ENCODE measurements at regions of chr11 and their contacts with region 1.

Region 1: DNA sequence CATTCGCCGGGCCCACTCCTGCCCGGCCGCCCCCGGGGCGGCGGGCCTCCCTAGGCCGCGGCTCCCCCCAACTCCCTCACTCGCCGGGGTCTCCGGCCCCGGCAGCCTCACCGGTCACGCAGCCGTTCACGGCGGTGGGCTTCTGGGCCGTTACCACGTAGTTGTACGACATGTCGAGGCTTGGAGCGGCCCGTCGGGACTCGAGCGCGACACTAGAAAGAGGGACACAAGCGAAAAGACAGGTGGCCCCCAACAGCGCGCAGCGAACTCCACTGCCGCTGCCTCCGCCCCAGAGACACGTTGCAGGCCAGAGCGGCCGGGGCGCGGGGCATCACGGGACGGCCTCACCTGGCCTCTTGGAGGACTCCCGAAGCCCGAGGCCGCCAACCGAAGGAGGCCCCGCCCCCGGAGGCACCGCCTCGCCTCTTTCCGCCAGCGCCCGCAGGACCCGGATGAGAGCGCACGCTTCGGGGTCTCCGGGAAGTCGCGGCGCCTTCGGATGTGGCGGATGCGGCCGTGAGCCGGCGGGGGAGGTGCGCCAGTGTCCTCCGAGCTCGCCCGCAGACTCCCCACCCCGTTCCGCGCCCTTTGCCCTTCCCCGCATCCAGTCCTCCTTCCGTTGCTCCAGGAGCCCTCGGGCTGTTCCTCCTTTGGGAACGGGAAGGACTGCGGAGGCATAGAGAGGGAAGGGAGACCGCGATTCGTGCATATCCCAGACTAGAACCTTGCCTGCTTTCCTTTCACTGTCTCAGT is at the starts of genes DDB1 and TKFC:
- DNase-seq: peak; percentile 66
- H3K4me3 ChIP-seq: peak within 1 kb of the TSS; percentile 93
- H3K27ac ChIP-seq: peak within 1 kb of the TSS; percentile 73
- H3K27me3 ChIP-seq: no peaks in the 10 kb centered on the region
- CTCF ChIP-seq: no peak
- polyA plus RNA-seq, gene DDB1: 286 and 340 TPM in 2 replicates
- polyA plus RNA-seq, gene TKFC: 20.3 and 24.9 TPM in 2 replicates

Region 2: DNA sequence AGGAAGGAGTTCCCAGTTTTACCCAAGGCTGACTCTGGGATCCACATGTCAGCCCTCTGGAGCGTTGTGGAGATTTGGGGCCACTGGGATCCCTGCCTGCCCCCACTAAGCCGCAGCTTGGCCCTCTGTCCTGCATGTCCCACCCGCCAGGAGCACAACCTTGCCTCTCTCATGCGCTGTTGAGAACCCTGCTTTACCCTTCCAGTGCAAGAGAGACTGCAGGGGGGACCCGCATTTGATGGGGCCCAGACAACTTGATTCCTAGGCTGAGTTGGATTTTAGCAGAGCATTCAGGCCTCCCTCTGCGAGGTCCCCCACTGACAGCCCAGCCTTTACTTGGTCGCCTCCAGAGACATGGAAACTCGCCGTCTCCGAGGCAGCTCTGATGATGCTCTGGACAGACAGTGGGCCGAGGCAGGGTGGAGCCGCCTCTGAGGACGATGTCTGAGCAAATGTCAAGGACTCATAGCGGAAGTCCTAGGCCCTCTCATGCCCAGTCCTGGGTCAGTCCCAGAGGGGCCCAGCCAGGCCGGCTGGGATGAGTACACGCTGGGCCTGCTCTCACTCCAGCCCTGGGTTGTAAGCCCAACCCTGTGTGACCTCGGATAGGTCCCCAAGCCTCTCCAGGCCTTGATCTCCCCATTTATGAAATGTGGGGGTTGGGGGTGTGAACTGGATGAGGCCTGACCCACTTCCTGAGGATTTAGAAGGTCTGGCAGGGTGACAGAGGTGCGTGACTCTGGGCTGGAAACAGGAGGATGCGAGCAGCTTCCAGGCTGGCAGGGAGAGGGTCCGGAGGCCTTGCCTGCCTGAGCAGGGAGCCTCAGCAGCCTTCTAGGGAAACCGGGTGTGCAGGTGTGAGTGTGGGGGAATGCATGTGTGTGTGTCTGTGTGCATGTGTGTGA is 230.1 kb before region 1 on chr11:
- CTCF ChIA-PET with region 1: no interaction called
- POLR2A ChIA-PET with region 1: no interaction called
- DNase-seq: no peak
- H3K4me3 ChIP-seq: no peak overlapping the region
- H3K27ac ChIP-seq: no peak overlapping the region
- H3K27me3 ChIP-seq: no peaks in the 10 kb centered on the region
- CTCF ChIP-seq: no peak

Region 3: GRCh38 chr11:61347916-61348461 is 15.0 kb after region 1 on chr11:
- CTCF ChIA-PET with region 1: interaction called, 17 read pairs
- POLR2A ChIA-PET with region 1: interaction called, 5 read pairs
- DNase-seq: no peak
- H3K4me3 ChIP-seq: no peak overlapping the region
- H3K27ac ChIP-seq: no peak overlapping the region
- H3K27me3 ChIP-seq: no peaks in the 10 kb centered on the region
- CTCF ChIP-seq: no peak

Region 4: DNA sequence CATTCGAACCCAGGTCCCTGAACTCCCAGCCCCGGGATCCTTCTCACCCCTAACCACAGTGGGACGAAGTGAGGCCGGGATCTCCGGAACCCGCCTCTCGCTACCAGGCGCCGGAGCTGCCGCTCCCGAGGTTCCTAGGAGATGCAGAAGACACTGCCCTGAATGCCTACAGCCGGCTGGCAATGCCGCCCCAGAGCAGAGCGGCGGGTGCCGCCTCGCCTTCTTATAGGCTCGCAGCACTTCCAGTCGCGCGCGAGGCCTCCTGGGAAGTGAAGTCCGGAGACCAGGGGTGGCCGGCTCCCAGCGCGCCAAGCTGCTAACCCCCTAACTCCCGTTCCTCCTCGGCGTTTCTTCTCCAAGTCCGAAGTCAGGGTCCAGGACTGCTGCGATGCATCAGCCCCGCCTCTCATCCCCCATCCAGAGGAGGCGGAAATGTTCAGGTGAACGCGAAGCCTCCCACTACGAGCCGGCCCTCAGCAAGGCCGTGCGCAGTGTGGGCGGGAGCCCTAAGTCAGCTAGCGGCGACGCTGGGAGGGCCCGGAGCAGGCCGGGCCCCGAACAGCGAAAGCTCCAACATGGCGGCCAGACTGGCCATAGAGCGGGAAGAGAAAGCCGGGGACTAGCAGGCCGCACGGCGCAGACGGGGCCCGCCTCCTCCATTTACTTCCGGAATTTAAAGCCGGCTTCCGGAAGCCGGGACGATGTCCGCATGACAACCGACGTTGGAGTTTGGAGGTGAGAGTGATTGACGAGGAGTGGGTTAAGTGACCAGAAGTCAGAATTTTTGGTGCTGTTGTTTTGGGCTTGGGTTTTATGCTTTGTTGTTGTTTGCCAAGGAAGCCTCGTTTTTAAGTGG is 28.9 kb after region 1 on chr11 and contains the starts of genes CYB561A3 and TMEM138:
- CTCF ChIA-PET with region 1: interaction called, 39 read pairs
- POLR2A ChIA-PET with region 1: interaction called, 15 read pairs
- DNase-seq: peak; percentile 81
- H3K4me3 ChIP-seq: peak within 1 kb of the TSS; percentile 74
- H3K27ac ChIP-seq: peak within 1 kb of the TSS; percentile 100
- H3K27me3 ChIP-seq: no peaks in the 10 kb centered on the region
- CTCF ChIP-seq: no peak
- polyA plus RNA-seq, gene CYB561A3: 34.5 and 43.7 TPM in 2 replicates
- polyA plus RNA-seq, gene TMEM138: 71.7 and 79.2 TPM in 2 replicates

Region 5: DNA sequence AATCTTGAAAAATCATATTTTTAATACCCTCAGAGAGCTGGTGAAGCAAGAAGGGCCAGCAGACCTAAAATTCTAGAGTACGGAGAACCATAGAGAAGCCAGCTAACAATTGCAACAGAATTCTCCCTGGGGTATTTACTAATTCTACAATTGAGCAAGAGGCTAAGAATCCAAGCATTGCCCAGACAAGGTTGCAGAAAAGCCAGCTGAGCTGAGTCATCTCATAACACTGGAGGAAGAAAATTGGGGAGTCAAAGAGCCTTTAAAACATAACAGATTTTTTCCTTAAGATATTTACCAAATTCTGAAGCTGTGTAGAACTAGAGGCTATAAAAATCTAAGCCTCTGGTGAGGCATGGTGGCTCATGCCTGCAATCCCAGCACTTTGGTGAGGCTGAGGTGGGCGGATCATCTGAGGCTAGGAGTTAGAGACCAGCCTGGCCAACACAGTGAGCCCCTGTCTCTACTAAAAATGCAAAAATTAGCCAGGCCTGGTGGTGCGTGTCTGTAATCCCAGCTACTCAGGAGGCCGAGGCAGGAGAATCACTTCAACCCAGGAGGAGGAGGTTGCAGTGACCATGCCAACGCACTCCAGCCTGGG is 45.8 kb after region 1 on chr11:
- CTCF ChIA-PET with region 1: interaction called, 519 read pairs
- POLR2A ChIA-PET with region 1: interaction called, 12 read pairs
- DNase-seq: peak; percentile 88
- H3K4me3 ChIP-seq: no peak overlapping the region
- H3K27ac ChIP-seq: peak overlapping the region; percentile 87
- H3K27me3 ChIP-seq: no peaks in the 10 kb centered on the region
- CTCF ChIP-seq: no peak

Region 6: GRCh38 chr11:61392981-61393595 is 60.1 kb after region 1 on chr11:
- CTCF ChIA-PET with region 1: interaction called, 519 read pairs
- POLR2A ChIA-PET with region 1: interaction called, 3 read pairs
- DNase-seq: no peak
- H3K4me3 ChIP-seq: peak overlapping the region; percentile 67
- H3K27ac ChIP-seq: no peak overlapping the region
- H3K27me3 ChIP-seq: no peaks in the 10 kb centered on the region
- CTCF ChIP-seq: peak; percentile 52

Region 7: GRCh38 chr11:61429691-61430582 is 97.0 kb after region 1 on chr11 and contains the starts of genes CPSF7 and SDHAF2:
- CTCF ChIA-PET with region 1: interaction called, 14 read pairs
- POLR2A ChIA-PET with region 1: no interaction called
- DNase-seq: peak; percentile 77
- H3K4me3 ChIP-seq: peak within 1 kb of the TSS; percentile 100
- H3K27ac ChIP-seq: peak within 1 kb of the TSS; percentile 96
- H3K27me3 ChIP-seq: no peaks in the 10 kb centered on the region
- CTCF ChIP-seq: no peak
- polyA plus RNA-seq, gene CPSF7: 37.3 and 40.3 TPM in 2 replicates
- polyA plus RNA-seq, gene SDHAF2: 71.6 and 86.5 TPM in 2 replicates

Measured in AG04450 (cell line).